Mucosa of descending colon (tissue), 3 donors: ENCODE measurements at regions of chr4 and their contacts with region 1.

Region 1: DNA sequence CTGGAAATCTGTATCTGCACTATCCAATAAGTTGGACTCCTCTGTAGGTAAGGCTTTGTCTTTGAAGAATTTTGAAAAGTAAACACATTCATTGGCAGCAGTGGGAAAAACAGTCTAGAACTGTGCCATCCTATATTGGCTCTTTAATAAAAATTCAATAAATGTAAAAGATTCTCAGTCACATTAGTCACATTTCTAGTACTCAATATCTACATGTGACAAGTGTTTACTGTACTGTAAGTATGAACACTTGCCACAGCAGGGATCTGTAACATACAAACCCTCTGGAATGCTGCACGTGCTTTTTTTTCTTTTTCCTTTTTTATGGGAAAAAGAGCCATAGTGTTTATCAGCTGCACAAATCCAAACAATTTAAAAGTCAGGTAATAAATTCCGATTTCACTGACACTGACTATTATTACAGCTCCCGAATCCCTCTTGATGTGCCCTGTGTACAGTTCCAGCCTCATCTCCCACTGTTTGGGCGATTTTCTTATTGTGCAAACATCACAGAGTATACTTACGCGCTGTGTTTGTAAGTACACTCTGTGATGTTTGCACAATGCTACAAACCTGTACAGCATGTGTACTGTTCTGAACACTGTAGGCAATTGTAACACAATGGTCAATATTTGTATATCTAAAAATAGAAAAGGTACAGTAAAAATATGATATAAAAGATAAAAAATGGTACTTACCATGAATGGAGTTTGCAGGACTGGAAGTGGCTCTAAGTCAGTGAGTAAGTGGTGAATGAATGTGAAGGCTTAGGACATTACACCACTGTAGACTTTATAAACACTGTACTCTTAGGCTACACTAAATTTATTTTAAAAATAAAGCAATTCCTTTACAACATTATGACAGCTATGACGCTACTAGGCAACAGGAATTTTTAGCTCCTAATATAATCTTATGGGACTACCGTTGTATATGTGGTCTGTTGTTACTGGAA is 8.7 kb downstream of the PYURF start:
- DNase-seq: no peak
- ATAC-seq: peak; percentile 85
- H3K4me3 ChIP-seq: no peak overlapping the region
- H3K4me1 ChIP-seq: peaks cover 6% of the 10 kb centered on the region
- CTCF ChIP-seq: no peak

Region 2: DNA sequence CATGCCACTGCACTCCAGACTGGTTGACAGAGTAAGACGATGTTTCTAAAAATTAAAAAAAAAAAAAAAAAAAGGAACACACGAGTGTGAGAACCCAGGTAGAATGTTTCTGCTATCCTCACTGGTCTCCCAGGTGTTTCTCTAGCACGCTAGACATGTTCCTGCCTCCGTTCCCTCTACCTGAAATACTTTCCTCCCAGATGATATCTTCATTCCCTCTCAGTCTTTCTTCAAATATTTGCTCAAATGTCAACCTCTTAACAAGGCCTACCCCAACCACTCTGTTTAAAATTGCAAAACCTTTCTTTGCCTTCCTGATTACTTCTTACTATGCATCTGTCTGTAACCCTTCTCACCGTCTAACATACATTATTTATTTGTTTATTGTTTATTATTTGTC is 296.9 kb before region 1 on chr4:
- intact Hi-C with region 1: loop called (anchors 2 to 10 kb)
- DNase-seq: no peak
- ATAC-seq: no peak
- H3K4me3 ChIP-seq: no peak overlapping the region
- H3K4me1 ChIP-seq: no peaks in the 10 kb centered on the region
- CTCF ChIP-seq: no peak

Region 3: DNA sequence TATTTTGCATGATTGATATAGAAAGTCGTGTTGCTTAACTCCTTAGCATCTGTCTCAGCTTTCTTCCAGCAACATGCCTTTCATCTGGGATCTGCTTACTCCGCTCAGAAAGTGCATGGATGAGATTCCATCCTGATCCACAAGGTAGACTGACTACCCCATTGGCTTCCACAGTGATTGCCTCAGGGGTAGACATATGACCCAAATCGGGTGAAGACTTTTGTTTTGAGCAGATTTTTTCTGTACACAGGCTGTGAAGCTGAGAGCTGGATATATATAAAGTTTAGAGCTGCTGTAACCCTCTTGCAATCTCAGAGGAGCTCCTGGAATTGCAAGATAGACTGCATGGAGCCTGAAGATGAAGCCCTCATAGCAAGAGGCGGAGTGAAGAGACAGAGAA is 144.9 kb before region 1 on chr4:
- intact Hi-C with region 1: loop called in 1 of 2 experiments (anchors 5 kb)
- DNase-seq: no peak
- ATAC-seq: no peak
- H3K4me3 ChIP-seq: no peak overlapping the region
- H3K4me1 ChIP-seq: no peaks in the 10 kb centered on the region
- CTCF ChIP-seq: no peak